WTC11 (cell line): ENCODE measurements at regions of chr15 and their contacts with region 1.

Region 1: GRCh38 chr15:47374222-47374621 is 343.1 kb upstream of the SEMA6D start:
- DNase-seq: peak; percentile 20
- ATAC-seq: peak; percentile 91
- H3K4me3 Mint-ChIP-seq: no peak overlapping the region
- H3K27ac Mint-ChIP-seq: no peak overlapping the region
- H3K4me1 Mint-ChIP-seq: peaks cover 16% of the 10 kb centered on the region
- H3K27me3 Mint-ChIP-seq: no peaks in the 10 kb centered on the region
- CTCF ChIP-seq: no peak

Region 2: GRCh38 chr15:47289656-47290055 is 84.6 kb before region 1 on chr15:
- CTCF ChIA-PET with region 1: no interaction called
- POLR2A ChIA-PET with region 1: no interaction called
- DNase-seq: peak; percentile 13
- ATAC-seq: peak; percentile 91
- H3K4me3 Mint-ChIP-seq: no peak overlapping the region
- H3K27ac Mint-ChIP-seq: no peak overlapping the region
- H3K4me1 Mint-ChIP-seq: peaks cover 25% of the 10 kb centered on the region
- H3K27me3 Mint-ChIP-seq: no peaks in the 10 kb centered on the region
- CTCF ChIP-seq: no peak

Region 3: DNA sequence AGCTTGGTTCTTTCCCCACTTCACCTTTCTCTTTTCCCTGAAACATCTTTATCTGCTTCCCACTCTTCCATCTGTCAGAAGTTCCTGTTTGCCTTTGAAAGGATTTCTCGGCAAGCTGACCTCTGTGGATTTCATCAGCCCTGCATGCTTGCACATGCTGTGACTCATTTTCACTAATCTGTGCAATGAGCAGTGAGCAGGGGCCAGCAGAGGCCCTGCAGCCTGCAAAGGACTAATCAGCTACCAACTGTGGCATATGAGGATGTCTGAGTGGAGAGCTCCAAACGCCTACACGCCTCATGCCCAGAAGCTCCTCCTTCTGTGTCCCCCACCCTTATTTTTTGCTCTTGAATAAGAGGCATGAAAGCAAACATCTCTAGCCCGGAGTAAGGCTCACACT is 10.1 kb after region 1 on chr15:
- CTCF ChIA-PET with region 1: interaction called, 16 read pairs
- POLR2A ChIA-PET with region 1: interaction called, 4 read pairs
- DNase-seq: no peak
- ATAC-seq: peak; percentile 77
- H3K4me3 Mint-ChIP-seq: no peak overlapping the region
- H3K27ac Mint-ChIP-seq: no peak overlapping the region; the same call in 1 of the 2 replicates
- H3K4me1 Mint-ChIP-seq: peaks cover 9% of the 10 kb centered on the region
- H3K27me3 Mint-ChIP-seq: no peaks in the 10 kb centered on the region
- CTCF ChIP-seq: no peak

Region 4: GRCh38 chr15:47404877-47405276 is 30.7 kb after region 1 on chr15:
- CTCF ChIA-PET with region 1: interaction called, 18 read pairs
- POLR2A ChIA-PET with region 1: no interaction called
- DNase-seq: no peak
- ATAC-seq: peak; percentile 40
- H3K4me3 Mint-ChIP-seq: no peak overlapping the region
- H3K27ac Mint-ChIP-seq: no peak overlapping the region
- H3K4me1 Mint-ChIP-seq: peaks cover 64% of the 10 kb centered on the region
- H3K27me3 Mint-ChIP-seq: no peaks in the 10 kb centered on the region; the same call in none of the 2 replicates
- CTCF ChIP-seq: no peak

Region 5: DNA sequence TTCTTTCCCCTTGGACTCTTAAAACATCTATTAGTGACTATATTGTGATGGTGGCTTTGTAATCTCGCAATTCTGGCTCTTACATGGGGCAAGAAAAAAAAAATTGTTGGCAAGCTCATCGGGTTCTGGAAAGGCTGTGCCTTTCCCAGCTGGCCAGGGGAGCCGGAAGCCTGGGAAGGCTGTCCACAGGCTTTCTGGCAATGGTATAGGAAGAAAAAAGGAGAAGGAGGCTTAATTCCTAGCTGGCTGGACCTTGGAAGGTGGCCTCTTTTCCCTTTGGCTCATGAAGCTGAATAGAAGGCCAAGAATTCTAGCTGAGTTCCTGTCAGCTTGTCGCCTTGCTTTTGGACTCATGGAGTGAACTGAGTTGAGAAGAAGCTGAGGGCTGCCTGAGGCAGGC is 99.6 kb after region 1 on chr15:
- CTCF ChIA-PET with region 1: interaction called, 12 read pairs
- POLR2A ChIA-PET with region 1: no interaction called
- DNase-seq: no peak
- ATAC-seq: no peak
- H3K4me3 Mint-ChIP-seq: no peak overlapping the region
- H3K27ac Mint-ChIP-seq: no peak overlapping the region
- H3K4me1 Mint-ChIP-seq: peaks cover 8% of the 10 kb centered on the region
- H3K27me3 Mint-ChIP-seq: no peaks in the 10 kb centered on the region
- CTCF ChIP-seq: no peak

Region 6: GRCh38 chr15:47750030-47750739 is 376.0 kb after region 1 on chr15:
- CTCF ChIA-PET with region 1: no interaction called
- POLR2A ChIA-PET with region 1: no interaction called
- DNase-seq: no peak
- ATAC-seq: no peak
- H3K4me3 Mint-ChIP-seq: no peak overlapping the region
- H3K27ac Mint-ChIP-seq: no peak overlapping the region
- H3K4me1 Mint-ChIP-seq: 0 out of 2 replicates have a peak, but pooled peaks cover 2% of the 10 kb centered on the region
- H3K27me3 Mint-ChIP-seq: peaks cover 14% of the 10 kb centered on the region
- CTCF ChIP-seq: no peak